Activated CD4-positive, alpha-beta T cell treated with anti-CD3 and anti-CD28 coated beads for 36 hours (primary cell): ENCODE measurements at regions of chr18 and their contacts with region 1.

Region 1: GRCh38 chr18:80171054-80171872 is 62.2 kb downstream of the ADNP2 start:
- DNase-seq: peak; percentile 81
- ATAC-seq: peak; percentile 10
- H3K4me3 Mint-ChIP-seq: no peak overlapping the region
- H3K27ac Mint-ChIP-seq: no peak overlapping the region
- H3K4me1 Mint-ChIP-seq: peaks cover 6% of the 10 kb centered on the region
- H3K27me3 Mint-ChIP-seq: peaks cover 43% of the 10 kb centered on the region

Region 2: DNA sequence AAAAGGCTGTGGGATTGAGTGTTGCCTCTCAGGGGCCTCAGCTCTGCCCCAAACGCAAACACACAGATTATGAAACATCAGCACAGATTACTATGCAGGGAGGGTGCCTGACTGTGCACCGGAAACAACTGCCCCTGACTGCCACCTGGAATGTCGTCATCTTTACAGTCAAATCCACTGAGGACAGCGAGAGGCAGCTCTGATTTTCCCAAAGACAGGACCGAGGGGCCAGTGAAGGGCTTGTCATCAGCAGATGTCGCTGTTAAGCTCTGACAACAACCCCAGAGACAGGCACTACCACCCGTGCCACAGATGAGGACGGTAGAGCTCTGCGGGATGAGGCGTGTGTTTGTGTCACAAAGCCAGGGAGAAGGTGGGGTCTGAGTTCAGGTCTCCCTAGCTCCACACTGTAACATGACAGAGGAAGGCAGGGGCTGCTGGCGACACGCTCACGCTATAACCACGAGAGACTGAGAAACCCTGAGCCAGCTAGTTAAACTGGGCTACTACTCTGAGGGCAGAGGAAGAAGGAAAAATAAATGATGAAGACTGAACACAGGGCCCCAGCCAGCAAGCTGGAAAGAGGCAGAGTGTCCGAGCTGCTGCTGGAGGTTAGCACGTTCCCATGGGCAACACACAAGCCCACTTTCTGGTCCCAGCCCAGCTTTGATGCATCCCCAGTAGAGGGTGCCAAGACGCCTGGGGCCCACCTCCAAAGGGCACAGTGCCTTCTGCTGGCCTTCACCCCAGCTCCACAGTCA is 29.1 kb after region 1 on chr18:
- CTCF ChIA-PET with region 1: no interaction called
- POLR2A ChIA-PET with region 1: no interaction called
- intact Hi-C with region 1: loop called in 1 of 2 experiments (anchors 1 kb)
- DNase-seq: no peak
- ATAC-seq: no peak
- H3K4me3 Mint-ChIP-seq: no peak overlapping the region
- H3K27ac Mint-ChIP-seq: no peak overlapping the region
- H3K4me1 Mint-ChIP-seq: peaks cover 17% of the 10 kb centered on the region
- H3K27me3 Mint-ChIP-seq: peaks cover 51% of the 10 kb centered on the region

Region 3: GRCh38 chr18:80247403-80247916 is 76.2 kb after region 1 on chr18 and contains the start of gene PARD6G:
- CTCF ChIA-PET with region 1: interaction called, 3 read pairs
- POLR2A ChIA-PET with region 1: no interaction called
- intact Hi-C with region 1: loop called in 1 of 2 experiments (anchors 2 kb)
- DNase-seq: peak; percentile 82
- ATAC-seq: peak; percentile 82
- H3K4me3 Mint-ChIP-seq: peak within 1 kb of the TSS; percentile 43
- H3K27ac Mint-ChIP-seq: no peak within 1 kb of the TSS
- H3K4me1 Mint-ChIP-seq: peaks cover 5% of the 10 kb centered on the region
- H3K27me3 Mint-ChIP-seq: peaks cover 38% of the 10 kb centered on the region
- total RNA-seq, gene PARD6G: not detected

Region 4: DNA sequence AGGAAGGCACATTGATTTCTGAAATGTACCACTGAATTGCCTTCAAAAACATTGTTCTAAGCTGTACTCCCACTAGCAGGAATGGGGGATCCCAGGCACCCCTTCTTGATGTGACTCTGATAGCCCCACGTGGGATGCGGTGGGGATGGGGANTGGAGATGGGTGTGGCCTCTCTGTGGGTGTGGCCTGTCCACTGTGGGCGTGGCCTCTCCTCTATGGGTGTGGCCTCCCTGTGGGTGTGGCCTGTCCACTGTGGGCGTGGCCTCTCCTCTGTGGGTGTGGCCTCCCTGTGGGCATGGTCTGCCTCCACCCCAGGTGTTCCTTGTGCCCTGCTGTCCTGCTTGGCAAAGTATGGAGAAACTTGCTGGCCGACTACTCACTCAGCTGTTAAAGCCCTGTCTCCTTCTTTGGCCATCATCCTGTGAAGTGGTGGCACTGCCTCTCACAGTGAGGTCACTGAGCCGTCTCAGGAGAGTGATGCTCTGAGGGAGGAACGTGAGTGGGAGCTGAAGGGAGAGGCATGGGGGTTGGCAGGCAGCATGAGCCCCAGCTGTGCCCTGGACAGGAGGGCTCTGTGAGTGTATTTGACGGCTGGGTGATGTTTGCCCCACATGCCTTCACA is 82.7 kb after region 1 on chr18:
- CTCF ChIA-PET with region 1: interaction called, 4 read pairs
- POLR2A ChIA-PET with region 1: no interaction called
- intact Hi-C with region 1: loop called in 1 of 2 experiments (anchors 1 kb)
- DNase-seq: peak; percentile 57
- ATAC-seq: peak; percentile 89
- H3K4me3 Mint-ChIP-seq: no peak overlapping the region
- H3K27ac Mint-ChIP-seq: no peak overlapping the region
- H3K4me1 Mint-ChIP-seq: no peaks in the 10 kb centered on the region
- H3K27me3 Mint-ChIP-seq: peaks cover 13% of the 10 kb centered on the region